Activated CD4-positive, alpha-beta T cell treated with anti-CD3 and anti-CD28 coated beads for 36 hours (primary cell): ENCODE measurements at regions of chr12 and their contacts with region 1.

Region 1: DNA sequence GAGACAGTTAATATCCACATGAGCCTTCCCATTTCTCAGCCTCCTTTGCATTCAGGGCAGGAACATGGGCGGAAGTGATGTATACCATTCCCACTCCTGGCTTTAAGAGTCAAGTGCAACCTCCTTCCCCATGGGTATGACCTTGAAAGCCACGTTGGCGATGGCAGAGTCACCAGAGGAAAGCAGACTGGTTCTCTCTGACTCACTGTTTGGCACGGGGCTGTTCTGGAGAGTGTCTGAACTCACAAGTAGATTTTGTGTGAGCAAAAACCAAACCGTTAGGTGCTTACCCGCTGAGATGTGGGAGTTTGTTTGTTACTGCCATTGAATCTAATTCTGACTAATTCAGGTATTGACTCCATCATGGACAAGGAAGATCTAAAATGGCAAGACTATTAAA is 36.7 kb upstream of the PZP start:
- DNase-seq: peak; percentile 88
- ATAC-seq: peak; percentile 89
- H3K4me3 Mint-ChIP-seq: peak overlapping the region; percentile 46
- H3K27ac Mint-ChIP-seq: peak overlapping the region; percentile 89
- H3K4me1 Mint-ChIP-seq: peaks cover 50% of the 10 kb centered on the region
- H3K27me3 Mint-ChIP-seq: peaks cover 10% of the 10 kb centered on the region

Region 2: DNA sequence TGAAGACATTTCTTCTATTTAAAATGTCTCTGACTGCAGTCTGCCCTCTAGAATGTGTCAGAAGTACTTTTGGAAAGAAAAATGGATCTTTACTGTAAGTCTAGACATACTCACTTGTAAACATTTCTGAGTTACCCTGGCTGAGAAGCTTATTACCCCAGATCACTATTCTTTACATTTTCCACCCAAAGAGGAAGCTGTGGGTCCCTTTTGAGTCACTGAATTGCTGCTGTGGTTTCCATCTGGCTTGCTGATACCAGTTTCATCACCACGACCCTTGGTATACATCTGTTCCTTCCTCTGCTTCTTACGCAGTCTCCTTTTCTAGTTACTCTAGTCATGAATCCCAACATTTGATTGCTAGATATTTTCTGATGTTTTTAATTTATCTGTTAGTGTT is 751.8 kb before region 1 on chr12:
- CTCF ChIA-PET with region 1: no interaction called
- POLR2A ChIA-PET with region 1: no interaction called
- intact Hi-C with region 1: loop called in 1 of 2 experiments (anchors 2 kb)
- DNase-seq: peak; percentile 71
- ATAC-seq: peak; percentile 93
- H3K4me3 Mint-ChIP-seq: no peak overlapping the region
- H3K27ac Mint-ChIP-seq: peak overlapping the region; percentile 51
- H3K4me1 Mint-ChIP-seq: peaks cover 24% of the 10 kb centered on the region
- H3K27me3 Mint-ChIP-seq: peaks cover 13% of the 10 kb centered on the region

Region 3: DNA sequence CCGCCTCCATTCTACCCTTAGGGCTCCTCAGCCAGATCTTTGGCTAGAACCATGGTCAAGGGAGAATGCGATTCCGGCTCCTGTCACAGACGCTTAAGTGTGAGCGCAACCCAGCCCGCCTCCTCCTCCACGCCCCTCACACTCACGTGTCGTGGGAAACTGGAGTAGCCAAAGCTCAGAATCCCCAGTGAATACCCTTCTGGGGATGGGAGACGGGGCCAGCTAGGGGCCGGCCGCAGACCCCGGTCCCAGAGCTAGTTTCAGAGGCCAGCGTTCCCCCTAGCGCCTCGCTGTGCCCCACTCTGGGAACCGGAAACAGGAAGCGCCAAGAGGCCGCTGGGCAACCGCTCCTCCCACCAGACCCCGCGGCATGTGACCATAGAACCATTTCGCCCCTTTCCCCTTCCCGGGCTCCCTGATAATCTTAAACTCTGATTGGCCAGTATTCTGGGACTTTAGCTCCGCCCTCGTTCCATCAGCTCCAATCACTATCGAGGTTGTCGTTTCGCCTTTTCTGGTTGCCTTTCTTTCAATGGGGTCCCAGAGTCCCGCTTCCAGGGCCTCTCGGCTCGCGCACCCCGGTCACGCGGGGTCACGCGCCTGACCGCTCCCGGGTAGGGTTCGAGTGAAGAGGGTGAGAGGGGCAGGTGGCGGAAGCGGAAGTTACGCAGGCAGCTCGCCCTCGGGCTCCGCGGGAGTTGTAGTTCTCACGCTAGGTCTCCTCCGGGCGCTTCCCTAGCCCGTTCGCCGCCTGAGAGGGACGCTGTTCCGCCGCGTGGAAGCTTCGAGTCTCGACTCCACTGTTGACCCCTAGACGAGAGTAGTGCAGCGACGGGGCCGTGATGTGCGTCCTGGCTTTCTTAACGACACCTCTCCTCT is 295.3 kb before region 1 on chr12 and contains the start of gene M6PR:
- CTCF ChIA-PET with region 1: no interaction called
- POLR2A ChIA-PET with region 1: no interaction called
- intact Hi-C with region 1: loop called in 1 of 2 experiments (anchors 2 kb)
- DNase-seq: peak; percentile 96
- ATAC-seq: peak; percentile 85
- H3K4me3 Mint-ChIP-seq: peak within 1 kb of the TSS; percentile 89
- H3K27ac Mint-ChIP-seq: peak within 1 kb of the TSS; percentile 97
- H3K4me1 Mint-ChIP-seq: peaks cover 57% of the 10 kb centered on the region
- H3K27me3 Mint-ChIP-seq: no peaks in the 10 kb centered on the region
- total RNA-seq, gene M6PR: 146 to 179 TPM

Region 4: DNA sequence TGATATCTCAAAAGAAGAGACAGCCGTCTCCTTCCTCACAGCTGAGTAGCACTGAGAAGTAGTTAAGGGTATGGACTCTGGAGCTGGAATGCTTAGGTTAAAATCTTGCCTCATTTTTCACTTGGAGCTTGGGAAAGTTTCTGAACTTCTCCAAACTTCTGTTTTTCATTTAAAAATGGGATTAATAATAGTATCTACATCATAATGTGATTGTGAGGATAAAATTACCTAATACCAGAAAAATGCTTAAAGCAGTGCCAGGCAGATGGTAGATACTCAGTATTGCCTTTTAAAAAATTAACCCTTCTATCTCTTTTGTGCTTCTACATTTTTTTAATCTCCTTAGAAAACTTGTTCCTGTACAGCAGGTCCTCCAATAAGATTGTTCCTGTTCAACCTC is 192.3 kb before region 1 on chr12:
- CTCF ChIA-PET with region 1: no interaction called
- POLR2A ChIA-PET with region 1: no interaction called
- intact Hi-C with region 1: no loop called
- DNase-seq: no peak
- ATAC-seq: no peak
- H3K4me3 Mint-ChIP-seq: no peak overlapping the region
- H3K27ac Mint-ChIP-seq: no peak overlapping the region
- H3K4me1 Mint-ChIP-seq: peaks cover 9% of the 10 kb centered on the region
- H3K27me3 Mint-ChIP-seq: no peaks in the 10 kb centered on the region

Region 5: GRCh38 chr12:9364224-9365176 is 119.6 kb after region 1 on chr12:
- CTCF ChIA-PET with region 1: no interaction called
- POLR2A ChIA-PET with region 1: no interaction called
- intact Hi-C with region 1: loop called in 1 of 2 experiments (anchors 1 kb)
- DNase-seq: peak; percentile 71
- ATAC-seq: peak; percentile 87
- H3K4me3 Mint-ChIP-seq: peak overlapping the region; percentile 9
- H3K27ac Mint-ChIP-seq: peak overlapping the region; percentile 17
- H3K4me1 Mint-ChIP-seq: peaks cover 37% of the 10 kb centered on the region
- H3K27me3 Mint-ChIP-seq: peaks cover 7% of the 10 kb centered on the region

Region 6: GRCh38 chr12:9797722-9798619 is 553.1 kb after region 1 on chr12:
- CTCF ChIA-PET with region 1: no interaction called
- POLR2A ChIA-PET with region 1: no interaction called
- intact Hi-C with region 1: loop called in 1 of 2 experiments (anchors 1 kb)
- DNase-seq: peak; percentile 81
- ATAC-seq: peak; percentile 84
- H3K4me3 Mint-ChIP-seq: peak overlapping the region; percentile 72
- H3K27ac Mint-ChIP-seq: peak overlapping the region; percentile 92
- H3K4me1 Mint-ChIP-seq: peaks cover 42% of the 10 kb centered on the region
- H3K27me3 Mint-ChIP-seq: no peaks in the 10 kb centered on the region

Region 7: GRCh38 chr12:9961106-9961505 is 716.2 kb after region 1 on chr12:
- CTCF ChIA-PET with region 1: no interaction called
- POLR2A ChIA-PET with region 1: no interaction called
- intact Hi-C with region 1: no loop called
- DNase-seq: no peak
- ATAC-seq: no peak
- H3K4me3 Mint-ChIP-seq: no peak overlapping the region
- H3K27ac Mint-ChIP-seq: no peak overlapping the region
- H3K4me1 Mint-ChIP-seq: peaks cover 24% of the 10 kb centered on the region
- H3K27me3 Mint-ChIP-seq: no peaks in the 10 kb centered on the region

Region 8: DNA sequence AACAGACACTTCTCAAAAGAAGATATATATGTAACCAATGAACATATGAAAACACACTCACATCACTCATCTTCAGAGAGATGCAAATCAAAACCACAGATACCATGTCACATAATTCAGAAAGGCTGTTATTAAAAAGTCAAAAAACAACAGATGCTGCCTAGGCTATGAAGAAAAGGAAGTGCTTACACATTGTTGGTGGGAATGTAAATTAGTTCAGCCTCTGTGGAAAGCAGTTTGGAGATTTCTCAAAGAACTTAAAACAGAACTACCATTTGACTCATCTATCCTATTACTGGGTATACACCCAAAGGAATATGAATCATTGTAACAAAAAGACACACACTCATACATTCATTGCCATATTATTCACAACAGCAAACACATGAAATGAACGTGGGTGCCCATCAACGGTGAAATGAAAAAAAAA is 1295.9 kb after region 1 on chr12:
- CTCF ChIA-PET with region 1: no interaction called
- POLR2A ChIA-PET with region 1: no interaction called
- intact Hi-C with region 1: loop called in 1 of 2 experiments (anchors 5 kb)
- DNase-seq: no peak
- ATAC-seq: peak; percentile 95
- H3K4me3 Mint-ChIP-seq: no peak overlapping the region
- H3K27ac Mint-ChIP-seq: peak overlapping the region; percentile 26
- H3K4me1 Mint-ChIP-seq: peaks cover 13% of the 10 kb centered on the region
- H3K27me3 Mint-ChIP-seq: peaks cover 42% of the 10 kb centered on the region